Vagina (tissue), 2 donors: ENCODE measurements at regions of chr2 and their contacts with region 1.

Region 1: DNA sequence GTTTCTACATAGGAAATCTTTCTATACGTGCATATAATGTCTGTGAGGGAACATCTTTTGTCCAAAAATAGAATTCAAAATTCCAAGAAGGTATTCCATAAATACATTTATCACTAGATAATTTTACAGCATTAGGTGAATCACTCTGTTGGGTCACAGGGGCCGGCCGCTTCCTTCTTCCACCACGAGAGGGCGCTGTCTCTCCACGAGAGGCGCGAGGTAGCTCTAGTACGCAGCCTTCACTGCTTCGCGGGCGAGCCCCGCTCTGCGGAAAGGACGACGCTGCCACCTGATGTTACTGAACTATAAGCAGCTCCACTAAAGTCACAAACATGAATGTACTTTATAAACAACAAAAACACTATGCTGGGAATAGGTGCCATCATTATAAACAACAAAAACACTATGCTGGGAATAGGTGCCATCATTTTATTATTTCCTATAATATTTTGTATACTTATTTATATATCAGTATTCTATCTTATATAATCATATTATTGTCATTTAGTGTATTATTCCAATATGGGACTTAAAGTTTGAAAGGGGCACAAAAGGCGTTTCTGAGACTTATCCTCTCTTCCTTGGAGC is 69.4 kb upstream of the REV1 start:
- DNase-seq: no peak
- H3K4me3 ChIP-seq: no peak overlapping the region
- H3K27ac ChIP-seq: no peak overlapping the region
- H3K4me1 ChIP-seq: no peaks in the 10 kb centered on the region
- H3K27me3 ChIP-seq: no peaks in the 10 kb centered on the region
- CTCF ChIP-seq: peak; percentile 91 to 97 (median 93)
- POLR2A ChIP-seq: no peak

Region 2: GRCh38 chr2:99481941-99482340 is 77.2 kb before region 1 on chr2:
- intact Hi-C with region 1: no loop called
- DNase-seq: no peak
- H3K4me3 ChIP-seq: no peak overlapping the region
- H3K27ac ChIP-seq: no peak overlapping the region
- H3K4me1 ChIP-seq: peaks cover 88% of the 10 kb centered on the region
- H3K27me3 ChIP-seq: no peaks in the 10 kb centered on the region
- CTCF ChIP-seq: no peak
- POLR2A ChIP-seq: no peak

Region 3: GRCh38 chr2:100246163-100247145 is 687.3 kb after region 1 on chr2:
- intact Hi-C with region 1: loop called (anchors 5 kb)
- DNase-seq: no peak
- H3K4me3 ChIP-seq: no peak overlapping the region
- H3K27ac ChIP-seq: no peak overlapping the region
- H3K4me1 ChIP-seq: no peaks in the 10 kb centered on the region
- H3K27me3 ChIP-seq: no peaks in the 10 kb centered on the region
- CTCF ChIP-seq: peak in 1 of 3 experiments; percentile 25
- POLR2A ChIP-seq: no peak

Region 4: DNA sequence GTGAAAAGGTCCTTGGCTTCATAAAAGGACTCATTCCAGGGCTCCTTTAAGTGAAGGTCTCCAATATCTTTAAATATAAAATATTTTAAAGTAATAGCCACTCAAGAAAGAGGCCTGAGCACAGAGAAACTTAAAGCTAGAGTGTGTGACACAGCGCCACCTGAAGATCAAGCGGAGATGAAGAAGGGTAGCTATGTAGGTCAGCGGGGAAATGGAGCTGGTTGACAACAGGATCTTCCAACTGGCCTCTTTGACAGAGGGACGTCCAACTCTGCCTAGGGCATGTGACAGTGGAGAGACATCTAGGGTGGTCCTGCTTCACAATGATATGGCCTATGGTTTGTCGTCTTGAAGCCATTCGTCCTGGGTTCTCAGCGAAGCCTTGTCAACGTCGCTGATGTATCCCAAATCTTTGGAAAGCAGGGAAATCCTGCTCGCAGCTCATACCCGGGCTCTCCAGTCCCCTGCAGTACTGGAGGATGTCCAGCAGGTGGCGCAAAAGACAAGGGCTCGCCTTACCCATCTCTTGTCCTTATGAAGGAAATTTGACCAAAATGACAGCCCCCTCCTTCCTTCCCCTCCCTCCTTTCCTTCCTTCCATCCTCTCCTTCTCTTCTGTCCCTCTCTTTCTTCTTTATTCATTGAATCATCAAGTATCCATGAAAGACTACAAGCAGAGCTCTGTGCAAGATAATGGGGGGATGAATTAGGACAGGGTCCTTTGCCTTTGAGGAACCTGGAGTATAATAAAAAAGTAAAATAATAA is 703.6 kb after region 1 on chr2:
- intact Hi-C with region 1: loop called (anchors 5 kb)
- DNase-seq: no peak
- H3K4me3 ChIP-seq: no peak overlapping the region
- H3K27ac ChIP-seq: no peak overlapping the region
- H3K4me1 ChIP-seq: no peaks in the 10 kb centered on the region
- H3K27me3 ChIP-seq: no peaks in the 10 kb centered on the region
- CTCF ChIP-seq: peak; percentile 85 to 98 (median 91)
- POLR2A ChIP-seq: no peak

Region 5: DNA sequence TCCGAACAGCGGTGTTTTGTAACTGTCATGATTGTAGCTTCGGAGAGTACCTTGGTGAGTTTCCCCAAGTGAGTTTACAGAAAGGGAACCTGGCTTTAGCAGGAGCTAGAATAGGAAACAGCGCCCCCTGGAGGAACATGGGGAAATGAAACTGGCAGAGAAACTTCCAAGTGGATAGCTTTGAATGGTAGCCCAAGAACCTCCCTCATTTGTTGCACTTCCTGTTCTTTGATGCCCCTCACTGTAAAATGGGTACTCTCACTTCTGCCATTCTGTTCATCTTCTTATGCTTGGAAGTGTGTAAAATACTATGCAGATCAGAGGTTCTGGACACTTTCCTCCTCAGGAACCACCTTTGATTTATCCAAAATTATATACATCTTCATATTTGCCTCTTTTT is 822.1 kb after region 1 on chr2:
- intact Hi-C with region 1: loop called (anchors 5 kb)
- DNase-seq: peak in 1 of 2 donors; percentile 86
- H3K4me3 ChIP-seq: no peak overlapping the region
- H3K27ac ChIP-seq: no peak overlapping the region
- H3K4me1 ChIP-seq: no peaks in the 10 kb centered on the region
- H3K27me3 ChIP-seq: no peaks in the 10 kb centered on the region
- CTCF ChIP-seq: peak; percentile 58 to 78 (median 73)
- POLR2A ChIP-seq: no peak